Left ventricle myocardium superior (tissue), 1 donor: ENCODE measurements at regions of chr19 and their contacts with region 1.

Region 1: GRCh38 chr19:12766051-12766521 is 9.3 kb downstream of the HOOK2 start:
- DNase-seq: peak; percentile 94
- ATAC-seq: peak; percentile 82

Region 2: GRCh38 chr19:12806239-12807081 is 40.4 kb after region 1 on chr19 and contains the start of gene RNASEH2A:
- intact Hi-C with region 1: loop called (anchors 5 kb)
- DNase-seq: peak; percentile 96
- ATAC-seq: peak; percentile 86
- total RNA-seq, gene RNASEH2A: 4.5 TPM

Region 3: GRCh38 chr19:12847159-12848139 is 81.4 kb after region 1 on chr19:
- intact Hi-C with region 1: loop called (anchors 10 kb)
- DNase-seq: peak; percentile 92
- ATAC-seq: peak; percentile 99

Region 4: GRCh38 chr19:12945479-12946091 is 179.5 kb after region 1 on chr19 and contains the start of gene RAD23A:
- intact Hi-C with region 1: no loop called
- DNase-seq: peak; percentile 100
- ATAC-seq: peak; percentile 95
- total RNA-seq, gene RAD23A: 188 TPM